ENCODE measurements at regions of chr15 and their contacts with region 1.

Region 1: DNA sequence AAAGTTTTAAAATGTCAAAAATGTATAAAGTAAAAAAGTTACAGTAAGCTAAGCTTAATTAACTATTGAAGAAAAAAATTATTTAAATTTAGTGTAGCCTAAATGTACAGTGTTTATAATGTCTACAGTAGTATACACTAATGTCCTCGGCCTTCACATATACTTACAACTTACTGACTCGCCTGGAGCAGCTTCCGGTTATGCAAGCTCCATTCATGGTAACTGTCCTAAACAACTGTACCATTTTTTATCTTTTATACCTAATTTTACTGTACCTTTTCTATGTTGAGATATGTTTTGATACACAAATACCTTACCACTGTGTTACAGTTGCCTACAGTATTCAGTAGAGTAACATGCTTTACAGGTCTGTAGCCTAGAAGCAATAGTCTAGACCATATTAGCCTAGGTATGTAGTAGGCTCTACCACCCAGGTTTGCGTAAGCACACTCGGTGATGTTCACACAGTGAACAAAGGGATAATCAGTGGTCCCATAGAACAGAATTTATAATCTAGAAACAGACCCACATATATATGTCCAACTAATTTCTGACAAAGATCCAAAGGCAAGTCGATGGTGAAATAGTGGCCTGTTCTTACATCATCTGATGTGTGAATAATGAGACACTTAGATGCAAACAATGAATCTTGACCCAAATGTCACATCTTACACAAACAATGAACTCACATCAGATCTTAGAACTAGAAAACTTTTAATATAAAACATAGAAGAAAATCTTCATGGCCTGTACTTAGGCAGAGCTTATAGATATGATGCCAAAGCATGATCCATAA is 17.4 kb upstream of the TM2D3 start:
- H3K4me3 ChIP-seq: no peak overlapping the region
- H3K27ac ChIP-seq: no peak overlapping the region
- H3K4me1 ChIP-seq: no peaks in the 10 kb centered on the region
- CTCF ChIP-seq: no peak

Region 2: DNA sequence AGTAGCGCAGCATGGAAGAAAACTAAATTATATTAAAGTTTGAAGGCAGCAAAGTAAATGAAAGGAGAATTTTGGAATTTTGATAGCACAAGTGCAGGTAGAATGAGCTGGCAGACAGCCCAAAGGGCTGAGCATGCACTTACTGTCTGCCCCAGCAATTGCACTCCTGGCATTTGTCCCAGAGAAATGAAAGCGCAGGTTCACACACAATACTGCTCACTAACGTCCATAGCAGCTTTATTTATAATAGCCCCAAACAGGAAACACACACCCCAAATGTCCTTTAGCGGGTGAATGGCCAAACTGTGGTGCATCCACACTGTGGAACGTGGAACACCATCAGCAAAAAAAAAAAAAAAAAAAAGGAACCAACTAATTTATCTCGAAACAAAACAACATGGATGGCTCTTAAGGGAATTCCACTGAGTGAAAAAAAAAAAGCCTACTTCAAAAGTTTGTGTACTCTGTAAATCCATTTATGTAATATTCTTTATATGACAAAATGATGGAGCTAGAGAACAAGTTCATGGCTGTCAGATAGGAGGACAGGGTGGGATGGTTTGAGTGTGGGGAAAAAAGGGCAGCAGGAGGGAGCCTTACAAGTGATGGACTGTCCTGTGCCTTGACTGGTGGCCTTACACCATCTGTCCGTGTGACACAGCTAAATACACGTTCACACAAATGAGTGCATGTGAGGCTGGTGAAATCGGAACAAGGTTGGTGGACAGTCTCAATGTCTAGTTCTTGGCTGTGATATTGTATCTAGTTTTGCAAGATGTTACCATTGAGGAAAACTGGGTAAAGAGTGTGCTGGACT is 11.4 kb before region 1 on chr15:
- CTCF ChIA-PET with region 1: interaction called, 13 read pairs
- POLR2A ChIA-PET with region 1: interaction called, 3 read pairs
- H3K4me3 ChIP-seq: no peak overlapping the region
- H3K27ac ChIP-seq: no peak overlapping the region
- H3K4me1 ChIP-seq: peaks cover 11% of the 10 kb centered on the region
- CTCF ChIP-seq: no peak

Region 3: DNA sequence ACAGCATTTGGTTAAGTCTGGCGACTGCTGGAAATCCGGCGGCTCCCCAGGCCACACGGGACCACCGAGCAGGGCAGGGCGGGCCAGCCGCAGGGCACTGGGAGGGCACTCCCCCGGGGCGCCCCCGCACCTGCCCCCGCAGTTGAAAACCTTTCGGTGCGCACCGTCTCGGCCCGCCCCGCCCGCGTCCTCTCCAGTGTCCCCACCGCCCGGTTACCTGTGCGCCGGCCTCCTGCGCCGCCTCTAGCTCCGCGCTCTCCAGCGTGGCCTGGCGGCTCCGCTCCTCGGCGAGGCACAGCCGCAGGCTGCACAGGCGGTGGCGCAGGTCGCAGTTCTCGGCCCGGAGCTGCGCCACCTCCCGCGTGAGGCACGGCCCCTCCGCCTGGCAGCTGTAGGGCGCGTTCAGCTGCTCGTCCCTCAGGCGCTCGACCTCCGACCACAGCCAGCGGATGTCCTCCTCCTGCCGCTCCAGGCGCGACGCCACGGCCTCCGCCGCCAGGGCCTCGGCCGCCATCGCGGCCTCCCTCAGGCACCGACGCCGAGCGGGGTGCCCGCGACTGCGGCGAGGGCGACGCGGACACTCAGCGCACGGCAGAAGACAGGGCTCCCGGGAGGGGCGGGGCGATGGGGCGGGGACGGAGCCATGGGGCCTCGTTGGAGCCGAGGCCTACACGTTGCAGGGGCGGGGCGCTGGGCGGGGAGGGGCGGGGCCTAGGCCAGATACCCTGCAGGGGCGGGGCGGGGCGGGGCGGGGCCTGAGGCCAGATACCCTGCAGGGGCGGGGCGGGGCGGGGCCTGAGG is 54.5 kb after region 1 on chr15 and contains the start of gene TARS3:
- CTCF ChIA-PET with region 1: interaction called, 10 read pairs
- POLR2A ChIA-PET with region 1: no interaction called
- H3K4me3 ChIP-seq: peak within 1 kb of the TSS; percentile 76
- H3K27ac ChIP-seq: peak within 1 kb of the TSS; percentile 93
- H3K4me1 ChIP-seq: peaks cover 6% of the 10 kb centered on the region
- CTCF ChIP-seq: peak; percentile 100